ENCODE measurements at regions of chr6 and their contacts with region 1.

Region 1: GRCh38 chr6:53437557-53438202 is 88.9 kb upstream of the ELOVL5 start:
- DNase-seq: peak; percentile 90
- H3K4me3 ChIP-seq: no peak overlapping the region
- H3K27ac ChIP-seq: peak overlapping the region; percentile 77
- H3K4me1 ChIP-seq: peaks cover 65% of the 10 kb centered on the region
- H3K27me3 ChIP-seq: no peaks in the 10 kb centered on the region

Region 2: DNA sequence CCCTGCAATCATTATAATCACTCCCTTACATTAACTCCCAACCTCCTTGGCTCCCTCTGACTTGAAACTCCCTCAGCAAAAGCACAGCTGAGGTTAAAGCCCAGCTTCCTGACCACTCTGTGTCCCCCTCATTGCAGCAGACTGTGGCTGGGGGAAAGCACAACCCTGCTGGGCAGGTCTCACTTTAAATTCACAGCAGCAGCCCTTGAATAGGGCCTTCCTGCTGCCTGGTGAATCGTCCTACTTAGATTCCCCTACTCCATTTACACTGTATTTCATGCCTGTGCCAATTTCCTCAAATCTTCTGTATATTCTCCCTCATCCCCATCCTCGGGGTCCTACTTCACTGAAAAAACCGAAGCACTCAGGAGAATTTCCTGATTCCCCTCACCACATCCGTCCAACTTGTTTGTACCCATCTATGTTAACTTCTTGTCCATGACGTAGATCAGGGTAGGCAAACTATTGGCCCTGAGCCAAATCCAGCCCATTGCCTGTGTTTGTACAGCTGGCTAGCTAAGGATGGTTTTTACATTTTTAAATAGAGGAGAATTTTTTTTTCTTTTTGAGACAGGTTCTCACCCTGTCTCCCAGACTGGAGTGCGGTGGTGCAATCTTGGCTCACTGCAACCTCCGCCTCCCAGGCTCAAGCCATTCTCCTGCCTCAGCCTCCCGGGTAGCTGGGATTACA is 257.6 kb before region 1 on chr6:
- in situ Hi-C with region 1: loop called (anchors 25 kb)
- DNase-seq: no peak
- H3K4me3 ChIP-seq: no peak overlapping the region
- H3K27ac ChIP-seq: no peak overlapping the region
- H3K4me1 ChIP-seq: no peaks in the 10 kb centered on the region
- H3K27me3 ChIP-seq: no peaks in the 10 kb centered on the region

Region 3: DNA sequence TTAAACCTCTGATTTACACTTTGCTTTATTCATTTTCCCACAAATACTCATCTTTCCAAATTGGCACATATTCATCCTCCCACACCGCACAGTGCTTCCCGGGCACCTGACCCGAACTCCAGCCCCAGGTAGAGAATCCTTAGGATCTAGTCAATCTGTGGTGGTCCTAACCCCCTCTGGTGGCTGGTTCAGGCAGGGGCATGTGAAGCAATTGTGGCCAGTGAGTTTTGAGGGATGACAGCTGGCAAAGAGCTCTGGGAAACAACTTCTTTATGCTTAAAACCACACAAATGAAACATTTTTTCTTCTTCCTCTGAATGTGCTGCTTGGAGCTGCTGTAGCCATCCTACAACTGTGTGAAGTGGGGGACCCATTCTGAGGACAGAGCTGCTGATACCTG is 143.6 kb before region 1 on chr6:
- in situ Hi-C with region 1: no loop called
- DNase-seq: peak; percentile 35
- H3K4me3 ChIP-seq: no peak overlapping the region
- H3K27ac ChIP-seq: no peak overlapping the region
- H3K4me1 ChIP-seq: peaks cover 12% of the 10 kb centered on the region
- H3K27me3 ChIP-seq: no peaks in the 10 kb centered on the region